ENCODE measurements at regions of chr3 and their contacts with region 1.

Region 1: GRCh38 chr3:191715585-191715984 is 254.6 kb downstream of the PYDC2 start:
- DNase-seq: no peak
- H3K4me3 ChIP-seq: no peak overlapping the region
- H3K27ac ChIP-seq: no peak overlapping the region
- H3K4me1 ChIP-seq: no peaks in the 10 kb centered on the region
- H3K27me3 ChIP-seq: no peaks in the 10 kb centered on the region
- CTCF ChIP-seq: no peak
- EP300 ChIP-seq: no peak
- POLR2A ChIP-seq: no peak

Region 2: DNA sequence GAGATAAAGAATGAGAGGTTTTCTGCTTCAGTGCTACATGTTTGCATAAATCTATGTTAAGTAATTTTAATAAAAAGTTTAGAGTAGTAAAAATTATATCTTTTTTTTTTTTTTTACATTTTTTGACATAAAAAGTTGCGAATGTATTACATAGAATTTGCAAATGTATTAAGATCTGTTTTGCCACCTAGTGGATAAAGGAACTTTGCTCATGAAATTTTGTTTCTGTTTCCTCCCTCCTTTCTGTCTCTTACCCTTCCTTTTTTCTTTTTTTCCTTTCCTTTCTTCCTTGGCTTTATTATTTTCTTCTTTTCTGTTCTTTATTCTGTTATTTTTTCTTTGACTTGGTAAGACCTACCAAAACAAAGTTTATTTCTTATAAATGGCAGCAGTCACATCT is 326.8 kb before region 1 on chr3:
- in situ Hi-C with region 1: no loop called
- intact Hi-C with region 1: no loop called
- DNase-seq: no peak
- H3K4me3 ChIP-seq: no peak overlapping the region
- H3K27ac ChIP-seq: no peak overlapping the region
- H3K4me1 ChIP-seq: no peaks in the 10 kb centered on the region
- H3K27me3 ChIP-seq: no peaks in the 10 kb centered on the region
- CTCF ChIP-seq: peak in 2 of 5 experiments; percentile 11 to 20
- EP300 ChIP-seq: no peak
- POLR2A ChIP-seq: no peak

Region 3: DNA sequence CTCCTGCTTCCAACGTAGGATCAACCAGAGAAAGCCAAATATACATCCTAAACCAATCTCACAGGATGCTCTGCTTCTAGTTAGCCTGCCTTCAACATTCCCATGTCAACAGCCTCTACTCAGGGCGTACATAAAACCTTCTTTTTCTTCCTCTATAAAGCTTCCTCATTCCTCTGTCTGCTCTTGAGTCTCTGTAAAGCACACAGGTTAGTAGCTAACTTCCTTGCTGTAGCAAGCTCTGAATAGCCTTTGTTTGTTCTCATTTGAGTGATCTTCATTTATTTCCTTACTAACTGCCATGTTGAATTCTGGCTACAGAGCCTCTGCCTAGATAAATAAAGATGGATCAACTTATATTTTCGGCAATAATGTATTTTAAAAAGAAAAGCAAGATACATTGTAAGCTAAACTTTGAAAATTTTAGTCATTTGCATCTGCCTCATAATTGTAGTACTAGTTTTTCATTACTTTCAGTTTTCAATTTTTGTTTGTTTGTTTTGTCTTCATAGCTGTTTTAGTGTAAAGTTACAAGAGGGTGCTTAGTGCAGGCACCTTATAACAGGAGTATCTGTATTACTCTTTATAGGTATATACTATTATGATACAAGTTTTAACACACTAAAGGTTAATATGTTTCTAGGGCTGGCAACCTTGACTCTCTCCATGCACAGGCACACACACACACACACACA is 243.5 kb after region 1 on chr3:
- in situ Hi-C with region 1: no loop called
- intact Hi-C with region 1: loop called (anchors 10 kb)
- DNase-seq: no peak
- H3K4me3 ChIP-seq: no peak overlapping the region
- H3K27ac ChIP-seq: no peak overlapping the region
- H3K4me1 ChIP-seq: no peaks in the 10 kb centered on the region
- H3K27me3 ChIP-seq: no peaks in the 10 kb centered on the region
- CTCF ChIP-seq: no peak
- EP300 ChIP-seq: no peak
- POLR2A ChIP-seq: no peak